Activated naive CD4-positive, alpha-beta T cell treated with anti-CD3 and anti-CD28 coated beads for 36 hours (primary cell): ENCODE measurements at regions of chr12 and their contacts with region 1.

Region 1: DNA sequence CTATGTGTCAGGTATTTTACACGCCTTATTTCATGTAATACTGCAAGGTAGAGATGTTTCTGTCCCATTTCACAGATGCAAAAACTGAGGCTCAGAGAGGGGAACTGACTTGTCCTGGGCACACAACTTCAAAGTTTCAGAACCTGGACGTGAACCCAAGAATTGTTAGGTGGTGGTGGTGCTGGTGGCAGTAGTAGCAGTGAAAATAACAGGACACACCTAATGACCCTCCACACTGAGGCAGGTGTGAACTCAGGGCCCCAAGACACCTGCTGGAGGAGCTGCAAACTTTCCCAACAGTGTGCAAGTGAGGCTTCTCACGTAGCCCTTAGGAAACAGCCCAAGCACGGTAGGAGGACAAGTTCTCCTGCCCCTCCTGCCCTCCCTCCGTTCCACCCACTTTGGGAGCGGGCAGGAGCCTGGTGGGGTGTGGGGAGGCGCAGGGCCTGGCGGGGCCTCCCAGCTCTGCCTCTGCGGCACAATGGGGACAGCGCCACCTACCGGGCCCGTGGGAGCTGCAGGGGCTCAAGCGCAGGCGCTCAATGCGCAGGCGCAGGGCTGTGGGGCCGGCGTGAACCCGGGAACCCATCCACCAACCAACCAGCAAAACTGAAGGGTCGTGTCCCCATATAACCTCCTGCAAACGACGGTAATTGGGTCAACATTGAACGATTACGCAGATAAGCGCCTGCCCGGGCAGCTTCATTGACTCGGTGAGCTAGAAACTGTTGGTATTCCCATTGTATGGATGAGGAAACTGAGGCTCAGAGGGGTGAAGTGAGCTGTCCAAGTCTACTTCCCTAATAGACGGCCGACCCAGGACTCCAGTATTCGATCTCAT is 12.0 kb upstream of the TRPV4 start:
- DNase-seq: peak; percentile 92
- H3K4me3 Mint-ChIP-seq: peak overlapping the region; percentile 30
- H3K27ac Mint-ChIP-seq: no peak overlapping the region
- H3K4me1 Mint-ChIP-seq: peaks cover 2% of the 10 kb centered on the region
- H3K27me3 Mint-ChIP-seq: no peaks in the 10 kb centered on the region

Region 2: DNA sequence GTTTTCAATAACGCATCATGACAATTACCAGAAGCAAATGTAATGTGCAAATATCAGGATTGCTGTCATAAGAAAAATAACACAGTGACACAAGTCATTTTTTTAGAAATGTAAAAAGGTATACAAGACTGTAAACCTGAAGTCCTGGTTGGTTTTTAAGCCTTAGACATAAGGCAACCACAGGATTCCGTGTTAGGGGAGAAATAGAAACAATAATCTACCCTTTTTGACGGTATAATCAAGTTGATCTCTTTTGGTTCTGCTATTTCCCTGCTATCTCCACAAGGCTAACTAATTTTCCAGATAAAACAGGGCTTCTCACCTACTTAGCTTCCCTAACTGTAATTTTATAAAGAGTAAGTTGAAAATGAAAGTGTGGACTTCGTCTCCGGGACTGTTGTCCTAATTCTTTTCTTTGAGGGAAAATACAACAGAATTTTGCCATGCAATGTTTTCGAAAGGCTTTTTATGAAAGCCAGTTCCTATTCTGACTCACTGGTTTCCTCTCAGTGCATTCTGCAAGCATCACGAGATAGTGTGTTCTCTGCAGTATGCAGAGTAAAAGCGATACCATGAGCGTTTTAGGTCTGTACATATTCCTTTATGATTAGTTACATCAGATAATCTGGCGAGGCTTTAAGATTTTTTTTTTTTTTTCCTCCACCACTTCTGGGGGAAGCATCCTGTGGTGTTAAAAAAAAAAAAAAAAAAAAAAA is 486.9 kb before region 1 on chr12:
- CTCF ChIA-PET with region 1: no interaction called
- intact Hi-C with region 1: no loop called
- DNase-seq: peak; percentile 11
- H3K4me3 Mint-ChIP-seq: no peak overlapping the region
- H3K27ac Mint-ChIP-seq: no peak overlapping the region
- H3K4me1 Mint-ChIP-seq: peaks cover 4% of the 10 kb centered on the region
- H3K27me3 Mint-ChIP-seq: peaks cover 2% of the 10 kb centered on the region

Region 3: DNA sequence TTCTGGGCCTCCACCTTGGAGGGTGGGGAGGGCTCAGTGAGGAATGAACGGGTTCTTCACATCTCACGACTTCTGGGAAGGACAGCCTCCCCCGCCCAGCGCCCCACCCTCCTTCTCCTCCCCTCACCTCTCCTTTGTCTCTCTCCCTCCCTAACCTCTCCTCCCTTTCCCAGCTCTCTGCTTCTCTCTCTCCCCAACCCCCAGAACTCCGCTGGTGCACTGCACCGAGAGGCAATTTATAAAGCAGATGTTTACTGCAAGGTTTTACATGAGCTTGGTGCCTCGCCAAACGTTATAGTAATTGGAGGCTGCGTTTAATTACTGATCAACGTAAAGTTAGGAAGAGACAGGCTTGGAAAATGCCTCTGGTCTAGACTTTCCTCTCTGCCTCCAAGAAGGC is 174.5 kb before region 1 on chr12:
- CTCF ChIA-PET with region 1: no interaction called
- intact Hi-C with region 1: no loop called
- DNase-seq: no peak
- H3K4me3 Mint-ChIP-seq: no peak overlapping the region
- H3K27ac Mint-ChIP-seq: no peak overlapping the region
- H3K4me1 Mint-ChIP-seq: no peaks in the 10 kb centered on the region
- H3K27me3 Mint-ChIP-seq: peaks cover 14% of the 10 kb centered on the region

Region 4: DNA sequence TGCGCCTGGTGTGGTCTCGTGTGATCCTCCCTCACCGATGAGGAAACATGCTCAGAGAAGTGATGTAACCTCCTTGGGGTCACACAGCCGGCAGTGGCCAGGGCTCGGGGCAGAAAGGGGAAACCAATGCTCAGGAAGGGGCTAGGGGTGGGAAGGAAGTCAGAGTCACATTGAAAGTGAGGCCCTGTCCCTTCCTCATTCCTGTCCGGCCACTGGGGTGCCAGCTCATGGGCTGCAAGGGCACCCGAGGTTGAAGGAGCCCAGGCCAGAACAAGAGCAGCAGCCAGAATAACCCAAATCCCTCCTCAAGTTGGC is 17.0 kb before region 1 on chr12:
- CTCF ChIA-PET with region 1: interaction called, 24 read pairs
- intact Hi-C with region 1: no loop called
- DNase-seq: no peak
- H3K4me3 Mint-ChIP-seq: no peak overlapping the region
- H3K27ac Mint-ChIP-seq: no peak overlapping the region
- H3K4me1 Mint-ChIP-seq: no peaks in the 10 kb centered on the region
- H3K27me3 Mint-ChIP-seq: peaks cover 7% of the 10 kb centered on the region

Region 5: DNA sequence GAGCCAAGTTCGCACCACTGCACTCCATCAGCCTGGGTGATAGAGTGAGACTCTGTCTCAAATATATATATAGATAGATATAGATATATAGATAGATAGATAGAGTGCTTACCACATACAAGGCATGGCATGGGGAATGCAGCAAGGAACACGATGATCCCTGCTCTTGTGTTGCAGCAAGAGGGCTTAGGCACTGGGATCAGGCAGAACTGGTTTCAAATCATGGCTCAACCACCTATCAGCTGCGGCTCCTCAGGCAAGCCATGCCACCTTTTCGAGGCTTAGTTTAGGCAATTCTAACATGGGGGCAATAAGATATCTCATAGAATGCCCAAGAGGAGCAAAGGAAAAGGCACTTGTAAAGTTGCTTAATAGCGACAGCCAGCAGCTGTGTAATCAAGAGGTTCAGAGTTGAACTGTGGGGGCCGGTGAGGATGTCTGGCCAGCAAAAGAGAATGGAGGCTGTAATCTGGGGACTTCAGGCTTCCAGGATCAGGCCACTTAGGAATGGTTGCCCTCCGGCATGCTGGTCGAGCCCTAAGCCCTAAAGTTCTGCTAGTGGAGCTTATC is 51.7 kb after region 1 on chr12:
- CTCF ChIA-PET with region 1: no interaction called
- intact Hi-C with region 1: no loop called
- DNase-seq: no peak
- H3K4me3 Mint-ChIP-seq: no peak overlapping the region
- H3K27ac Mint-ChIP-seq: no peak overlapping the region
- H3K4me1 Mint-ChIP-seq: peaks cover 26% of the 10 kb centered on the region
- H3K27me3 Mint-ChIP-seq: no peaks in the 10 kb centered on the region

Region 6: GRCh38 chr12:110015132-110015531 is 169.9 kb after region 1 on chr12:
- CTCF ChIA-PET with region 1: no interaction called
- intact Hi-C with region 1: no loop called
- DNase-seq: no peak
- H3K4me3 Mint-ChIP-seq: no peak overlapping the region
- H3K27ac Mint-ChIP-seq: peak overlapping the region; percentile 20
- H3K4me1 Mint-ChIP-seq: peaks cover 42% of the 10 kb centered on the region
- H3K27me3 Mint-ChIP-seq: no peaks in the 10 kb centered on the region